H1 (cell line): ENCODE measurements at regions of chr4 and their contacts with region 1.

Region 1: GRCh38 chr4:2811830-2812611 is 19.1 kb downstream of the SH3BP2 start:
- DNase-seq: no peak
- H3K4me3 ChIP-seq: no peak overlapping the region
- H3K27ac ChIP-seq: no peak overlapping the region
- H3K4me1 ChIP-seq: peaks cover 0 to 19% (median 9%) of the 10 kb centered on the region in 4 experiments; a peak in 6 of 7 replicates
- H3K27me3 ChIP-seq: peaks cover 0 to 3% (median 0%) of the 10 kb centered on the region in 4 experiments; a peak in 2 of 7 replicates
- CTCF ChIP-seq: no peak
- EP300 ChIP-seq: no peak
- POLR2A ChIP-seq: no peak
- RAD21 ChIP-seq: 0 out of 4 replicates have a peak, but pooled peaks of 1 of the 2 experiments have one; percentile 7

Region 2: GRCh38 chr4:2800691-2801596 is 11.1 kb before region 1 on chr4:
- CTCF ChIA-PET with region 1: interaction called, 6 read pairs
- POLR2A ChIA-PET with region 1: interaction called, 48 read pairs
- DNase-seq: peak in 1 of 2 experiments; percentile 80
- H3K4me3 ChIP-seq: no peak overlapping the region; a peak in 1 of 8 replicates
- H3K27ac ChIP-seq: no peak overlapping the region
- H3K4me1 ChIP-seq: peaks cover 0 to 15% (median 10%) of the 10 kb centered on the region in 4 experiments; a peak in 4 of 7 replicates
- H3K27me3 ChIP-seq: no peaks in the 10 kb centered on the region
- CTCF ChIP-seq: no peak
- EP300 ChIP-seq: no peak
- POLR2A ChIP-seq: peak in 1 of 2 experiments; percentile 59; a peak in 1 of 3 replicates
- RAD21 ChIP-seq: no peak